Activated CD4-positive, alpha-beta T cell treated with anti-CD3 and anti-CD28 coated beads for 36 hours (primary cell): ENCODE measurements at regions of chr3 and their contacts with region 1.

Region 1: GRCh38 chr3:38117748-38118420 is 19.0 kb downstream of the ACAA1 start:
- DNase-seq: peak; percentile 86
- ATAC-seq: peak; percentile 91
- H3K4me3 Mint-ChIP-seq: no peak overlapping the region
- H3K27ac Mint-ChIP-seq: no peak overlapping the region
- H3K4me1 Mint-ChIP-seq: no peaks in the 10 kb centered on the region
- H3K27me3 Mint-ChIP-seq: no peaks in the 10 kb centered on the region

Region 2: DNA sequence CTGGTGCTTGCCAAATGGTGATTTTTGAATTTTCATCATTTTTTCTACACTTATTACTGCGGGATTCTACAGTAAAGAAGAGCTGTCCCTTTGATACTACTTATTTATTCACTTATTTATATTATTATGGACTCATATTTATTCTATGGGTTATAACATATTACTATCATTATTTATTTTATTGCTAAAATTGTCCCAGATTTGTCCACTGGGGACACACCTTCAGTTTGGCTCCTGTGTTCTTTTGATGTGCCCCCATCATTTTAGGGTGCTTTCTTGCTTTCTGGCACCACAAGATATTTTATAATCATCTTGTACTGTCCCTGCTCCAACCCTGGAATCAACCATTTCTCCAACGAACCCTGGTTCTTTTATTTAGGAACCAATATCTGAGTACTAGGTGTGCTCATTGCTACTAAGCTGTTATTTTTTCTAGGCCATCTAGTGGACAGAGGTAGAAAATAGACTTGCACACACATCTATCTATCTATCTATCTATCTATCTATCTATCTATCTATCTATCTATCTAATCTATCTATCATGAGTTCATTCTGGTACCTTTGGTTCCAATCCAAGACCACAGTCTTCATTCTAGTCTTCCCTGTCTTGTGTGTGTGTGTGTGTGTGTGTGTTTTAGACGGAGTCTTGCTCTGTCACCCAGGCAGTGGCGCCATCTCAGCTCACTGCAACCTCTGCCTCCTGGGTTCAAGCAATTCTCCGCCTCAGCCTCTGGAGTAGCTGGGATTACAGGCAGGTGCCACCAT is 180.2 kb after region 1 on chr3:
- CTCF ChIA-PET with region 1: interaction called, 4 read pairs
- POLR2A ChIA-PET with region 1: no interaction called
- intact Hi-C with region 1: loop called in 1 of 2 experiments (anchors 1 kb)
- DNase-seq: no peak
- ATAC-seq: no peak
- H3K4me3 Mint-ChIP-seq: no peak overlapping the region
- H3K27ac Mint-ChIP-seq: no peak overlapping the region
- H3K4me1 Mint-ChIP-seq: no peaks in the 10 kb centered on the region
- H3K27me3 Mint-ChIP-seq: peaks cover 2% of the 10 kb centered on the region

Region 3: GRCh38 chr3:38479431-38480092 is 361.7 kb after region 1 on chr3:
- CTCF ChIA-PET with region 1: interaction called, 4 read pairs
- POLR2A ChIA-PET with region 1: no interaction called
- intact Hi-C with region 1: loop called (anchors 1 kb)
- DNase-seq: peak; percentile 64
- ATAC-seq: peak; percentile 78
- H3K4me3 Mint-ChIP-seq: no peak overlapping the region
- H3K27ac Mint-ChIP-seq: no peak overlapping the region
- H3K4me1 Mint-ChIP-seq: peaks cover under 1% of the 10 kb centered on the region
- H3K27me3 Mint-ChIP-seq: no peaks in the 10 kb centered on the region